Posterior vena cava (tissue), 2 donors: ENCODE measurements at regions of chr19 and their contacts with region 1.

Region 1: GRCh38 chr19:42613666-42614065 is 18.9 kb upstream of the CEACAM8 start:
- DNase-seq: no peak

Region 2: GRCh38 chr19:42762782-42763181 is 149.1 kb after region 1 on chr19:
- intact Hi-C with region 1: loop called in 1 of 2 experiments (anchors 2 kb)
- DNase-seq: no peak